Activated CD4-positive, alpha-beta memory T cell treated with anti-CD3 and anti-CD28 coated beads for 36 hours (primary cell): ENCODE measurements at regions of chr16 and their contacts with region 1.

Region 1: GRCh38 chr16:21646721-21647561 is 5.5 kb downstream of the IGSF6 start:
- DNase-seq: peak; percentile 92
- H3K4me3 Mint-ChIP-seq: peak overlapping the region; percentile 30
- H3K27ac Mint-ChIP-seq: peak overlapping the region; percentile 79
- H3K4me1 Mint-ChIP-seq: peaks cover 52% of the 10 kb centered on the region
- H3K27me3 Mint-ChIP-seq: no peaks in the 10 kb centered on the region

Region 2: GRCh38 chr16:21584817-21585216 is 62.1 kb before region 1 on chr16:
- CTCF ChIA-PET with region 1: interaction called, 39 read pairs
- POLR2A ChIA-PET with region 1: no interaction called
- intact Hi-C with region 1: loop called (anchors 2 kb)
- DNase-seq: no peak
- H3K4me3 Mint-ChIP-seq: no peak overlapping the region
- H3K27ac Mint-ChIP-seq: no peak overlapping the region
- H3K4me1 Mint-ChIP-seq: peaks cover 2% of the 10 kb centered on the region
- H3K27me3 Mint-ChIP-seq: no peaks in the 10 kb centered on the region

Region 3: GRCh38 chr16:21599233-21600030 is 47.5 kb before region 1 on chr16 and contains the start of gene METTL9:
- CTCF ChIA-PET with region 1: interaction called, 5 read pairs
- POLR2A ChIA-PET with region 1: interaction called, 3 read pairs
- intact Hi-C with region 1: loop called (anchors 1 kb)
- DNase-seq: peak; percentile 96
- H3K4me3 Mint-ChIP-seq: peak within 1 kb of the TSS; percentile 93
- H3K27ac Mint-ChIP-seq: peak within 1 kb of the TSS; percentile 92
- H3K4me1 Mint-ChIP-seq: peaks cover 57% of the 10 kb centered on the region
- H3K27me3 Mint-ChIP-seq: no peaks in the 10 kb centered on the region
- total RNA-seq, gene METTL9: 100 to 104 TPM

Region 4: GRCh38 chr16:21619765-21620425 is 27.0 kb before region 1 on chr16:
- CTCF ChIA-PET with region 1: interaction called, 15 read pairs
- POLR2A ChIA-PET with region 1: interaction called, 3 read pairs
- intact Hi-C with region 1: loop called (anchors 1 kb)
- DNase-seq: no peak
- H3K4me3 Mint-ChIP-seq: no peak overlapping the region
- H3K27ac Mint-ChIP-seq: no peak overlapping the region
- H3K4me1 Mint-ChIP-seq: peaks cover 56% of the 10 kb centered on the region
- H3K27me3 Mint-ChIP-seq: no peaks in the 10 kb centered on the region

Region 5: GRCh38 chr16:21626659-21627277 is 20.2 kb before region 1 on chr16:
- CTCF ChIA-PET with region 1: interaction called, 15 read pairs
- POLR2A ChIA-PET with region 1: no interaction called
- intact Hi-C with region 1: loop called (anchors 1 kb)
- DNase-seq: peak; percentile 43
- H3K4me3 Mint-ChIP-seq: no peak overlapping the region
- H3K27ac Mint-ChIP-seq: peak overlapping the region; percentile 59
- H3K4me1 Mint-ChIP-seq: peaks cover 47% of the 10 kb centered on the region
- H3K27me3 Mint-ChIP-seq: no peaks in the 10 kb centered on the region

Region 6: DNA sequence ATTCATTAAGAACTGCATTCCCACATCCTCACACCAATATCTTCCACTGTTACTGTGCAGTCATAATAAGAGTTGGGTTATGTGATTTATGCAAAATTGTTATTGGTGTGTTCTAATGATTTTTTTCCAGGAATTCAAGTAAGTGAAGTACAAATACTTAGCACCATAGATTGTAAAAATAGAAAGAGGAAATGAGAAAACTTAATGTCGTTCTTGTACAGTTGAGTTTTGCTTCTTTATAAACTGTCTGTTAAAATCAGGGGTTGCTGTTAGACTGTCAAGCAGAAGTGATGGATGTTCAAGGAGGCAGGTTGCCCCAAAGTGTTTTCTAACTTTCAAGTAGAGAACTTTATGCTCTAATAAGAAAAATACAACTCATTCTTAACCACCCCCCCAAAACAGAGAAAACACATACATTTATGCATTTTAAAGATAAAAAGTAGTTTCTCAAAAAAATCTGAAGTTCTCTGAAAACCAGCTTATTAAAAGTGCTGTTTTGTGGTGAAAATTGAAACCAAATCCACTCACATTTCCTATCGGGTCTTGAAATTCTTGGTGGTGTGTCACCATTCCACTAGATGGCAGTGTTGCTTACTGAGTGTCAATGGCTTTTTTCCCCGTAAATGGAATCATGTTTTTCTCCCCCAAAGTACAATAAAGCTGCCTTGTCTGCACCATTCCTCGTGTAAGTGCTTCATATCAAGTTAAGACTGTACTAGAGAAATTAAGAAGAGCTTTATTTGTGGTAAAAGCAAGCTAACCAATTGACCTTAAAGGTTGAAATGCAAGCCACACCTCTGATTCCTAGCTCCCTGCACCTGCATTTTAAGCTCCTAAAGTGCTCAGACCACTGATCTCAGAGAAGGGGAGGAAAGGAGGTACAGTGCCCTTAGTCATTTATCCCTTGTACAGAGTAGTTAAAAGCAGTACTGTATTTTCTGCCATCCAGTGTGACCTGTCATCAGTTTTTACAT is 10.1 kb after region 1 on chr16:
- CTCF ChIA-PET with region 1: interaction called, 36 read pairs
- POLR2A ChIA-PET with region 1: interaction called, 4 read pairs
- intact Hi-C with region 1: loop called (anchors 1 kb)
- DNase-seq: peak; percentile 29
- H3K4me3 Mint-ChIP-seq: no peak overlapping the region
- H3K27ac Mint-ChIP-seq: no peak overlapping the region
- H3K4me1 Mint-ChIP-seq: peaks cover 41% of the 10 kb centered on the region
- H3K27me3 Mint-ChIP-seq: no peaks in the 10 kb centered on the region

Region 7: DNA sequence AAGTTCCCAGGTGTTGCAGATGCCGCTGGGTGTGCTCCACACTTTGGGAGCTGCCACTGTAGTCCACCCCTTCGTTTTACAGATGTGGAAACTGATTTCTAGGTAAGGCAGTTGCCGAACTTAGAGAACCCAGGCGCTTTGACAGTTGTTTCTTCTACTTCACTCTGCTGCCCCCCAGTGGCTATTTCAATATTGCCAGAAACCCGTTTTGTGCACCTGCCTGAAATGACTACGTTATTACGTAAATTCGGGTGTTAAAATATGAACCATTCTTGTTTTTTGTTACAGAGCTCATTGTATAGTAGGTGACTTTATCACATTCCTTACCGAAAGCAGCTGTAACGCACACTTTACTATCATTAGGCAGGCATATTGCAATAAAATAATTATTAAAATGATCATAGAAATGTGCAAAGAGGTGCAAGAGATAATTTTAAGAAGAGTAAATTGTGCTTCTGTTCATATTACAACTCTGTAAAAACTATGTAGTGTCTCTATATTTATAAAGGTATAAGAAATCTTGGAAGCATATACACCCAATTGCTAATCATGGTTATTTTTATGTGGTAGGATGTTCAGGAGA is 61.7 kb after region 1 on chr16:
- CTCF ChIA-PET with region 1: interaction called, 12 read pairs
- POLR2A ChIA-PET with region 1: no interaction called
- intact Hi-C with region 1: no loop called
- DNase-seq: peak; percentile 90
- H3K4me3 Mint-ChIP-seq: no peak overlapping the region
- H3K27ac Mint-ChIP-seq: no peak overlapping the region
- H3K4me1 Mint-ChIP-seq: peaks cover 4% of the 10 kb centered on the region
- H3K27me3 Mint-ChIP-seq: no peaks in the 10 kb centered on the region